A549 (cell line): ENCODE measurements at regions of chr14 and their contacts with region 1.

Region 1: DNA sequence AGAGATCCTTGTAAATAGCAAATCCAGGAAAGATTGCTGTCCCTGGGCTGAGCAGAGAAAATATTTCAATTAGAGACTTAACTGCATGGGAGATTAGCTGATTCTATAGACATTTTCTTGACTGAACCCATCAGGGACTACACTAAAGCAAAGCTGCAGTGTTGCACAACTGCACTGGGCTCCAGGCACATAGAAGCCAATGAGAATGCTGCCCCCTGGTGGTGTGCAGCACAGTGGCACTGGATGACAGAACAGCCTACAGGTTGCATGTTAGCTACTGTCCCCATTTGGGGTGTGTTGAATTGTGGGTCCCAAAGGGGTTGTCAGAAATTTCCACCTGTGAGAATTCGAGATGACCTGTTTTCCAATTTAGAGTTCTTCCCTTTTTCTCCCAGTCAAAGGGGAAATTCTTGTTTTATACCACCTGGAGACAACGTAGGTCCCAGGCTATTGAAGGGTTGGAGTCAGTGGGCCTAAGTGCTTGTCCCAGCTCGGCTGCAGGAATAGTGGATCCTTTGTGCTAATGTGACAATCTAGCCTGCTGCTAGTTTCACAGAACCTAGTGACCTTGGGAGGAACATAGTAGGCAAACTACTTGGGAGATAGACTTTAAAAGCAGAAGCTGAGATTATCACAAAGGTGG is 114.7 kb downstream of the SLC8A3 start:
- DNase-seq: peak; percentile 85
- ATAC-seq: peak; percentile 97 to 99
- H3K4me3 ChIP-seq: no peak overlapping the region
- H3K27ac ChIP-seq: peak overlapping the region; percentile 55 to 58; a peak in 5 of 6 replicates
- H3K4me1 ChIP-seq: peaks cover 14% of the 10 kb centered on the region
- CTCF ChIP-seq: peak; percentile 95
- EP300 ChIP-seq: no peak
- POLR2A ChIP-seq: no peak
- RAD21 ChIP-seq: peak; percentile 89 to 95

Region 2: DNA sequence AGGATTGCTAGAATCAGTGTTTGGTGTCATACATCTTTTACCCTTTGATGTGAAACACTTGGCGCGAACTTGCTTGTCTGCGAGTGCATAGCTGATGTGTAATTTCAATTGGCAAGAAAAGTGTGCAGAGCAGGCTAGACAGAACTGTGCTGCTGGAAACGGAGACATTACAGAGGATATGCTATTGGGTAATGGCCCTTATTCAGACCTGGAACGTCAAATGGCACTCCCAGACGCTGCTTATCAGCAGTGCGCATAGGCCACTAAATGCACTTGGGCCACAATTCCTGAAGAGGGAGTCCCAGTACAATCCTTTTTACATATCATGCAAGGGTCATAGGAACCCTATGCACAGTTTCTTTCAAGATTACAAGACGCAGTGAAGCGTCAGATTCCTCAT is 261.3 kb before region 1 on chr14:
- CTCF ChIA-PET with region 1: interaction called, 85 read pairs
- POLR2A ChIA-PET with region 1: no interaction called
- DNase-seq: peak in 1 of 2 experiments; percentile 46
- ATAC-seq: 0 out of 6 replicates have a peak, but pooled peaks have one; percentile 36 to 53
- H3K4me3 ChIP-seq: no peak overlapping the region
- H3K27ac ChIP-seq: no peak overlapping the region
- H3K4me1 ChIP-seq: no peaks in the 10 kb centered on the region
- CTCF ChIP-seq: peak; percentile 34; the same call in 2 of the 3 replicates
- EP300 ChIP-seq: no peak
- POLR2A ChIP-seq: no peak
- RAD21 ChIP-seq: peak; percentile 48 to 53; a peak in 3 of 5 replicates

Region 3: GRCh38 chr14:70045844-70046535 is 28.1 kb before region 1 on chr14:
- CTCF ChIA-PET with region 1: interaction called, 101 read pairs
- POLR2A ChIA-PET with region 1: no interaction called
- DNase-seq: peak; percentile 71 to 82
- ATAC-seq: peak; percentile 87 to 95
- H3K4me3 ChIP-seq: no peak overlapping the region
- H3K27ac ChIP-seq: peak overlapping the region; percentile 89 to 90
- H3K4me1 ChIP-seq: peaks cover 39% of the 10 kb centered on the region
- CTCF ChIP-seq: peak; percentile 74
- EP300 ChIP-seq: no peak
- POLR2A ChIP-seq: no peak; the same call in 1 of the 2 replicates
- RAD21 ChIP-seq: peak; percentile 90

Region 4: GRCh38 chr14:70052990-70053389 is 21.1 kb before region 1 on chr14:
- CTCF ChIA-PET with region 1: interaction called, 101 read pairs
- POLR2A ChIA-PET with region 1: no interaction called
- DNase-seq: peak in 1 of 2 experiments; percentile 23
- ATAC-seq: no peak
- H3K4me3 ChIP-seq: no peak overlapping the region
- H3K27ac ChIP-seq: no peak overlapping the region
- H3K4me1 ChIP-seq: peaks cover 15% of the 10 kb centered on the region
- CTCF ChIP-seq: no peak
- EP300 ChIP-seq: no peak
- POLR2A ChIP-seq: no peak
- RAD21 ChIP-seq: no peak

Region 5: GRCh38 chr14:70061108-70061507 is 12.9 kb before region 1 on chr14:
- CTCF ChIA-PET with region 1: interaction called, 34 read pairs
- POLR2A ChIA-PET with region 1: no interaction called
- DNase-seq: no peak
- ATAC-seq: no peak
- H3K4me3 ChIP-seq: no peak overlapping the region
- H3K27ac ChIP-seq: peak overlapping the region in 1 of 2 experiments; percentile 3; a peak in 1 of 6 replicates
- H3K4me1 ChIP-seq: peaks cover 16% of the 10 kb centered on the region
- CTCF ChIP-seq: no peak
- EP300 ChIP-seq: no peak
- POLR2A ChIP-seq: no peak
- RAD21 ChIP-seq: no peak

Region 6: GRCh38 chr14:70086685-70087379 is 12.8 kb after region 1 on chr14:
- CTCF ChIA-PET with region 1: interaction called, 41 read pairs
- POLR2A ChIA-PET with region 1: no interaction called
- DNase-seq: peak in 1 of 2 experiments; percentile 65
- ATAC-seq: peak; percentile 59 to 79; a peak in 3 of 6 replicates
- H3K4me3 ChIP-seq: no peak overlapping the region
- H3K27ac ChIP-seq: no peak overlapping the region
- H3K4me1 ChIP-seq: no peaks in the 10 kb centered on the region
- CTCF ChIP-seq: peak; percentile 62
- EP300 ChIP-seq: no peak
- POLR2A ChIP-seq: no peak
- RAD21 ChIP-seq: peak; percentile 48 to 52; a peak in 4 of 5 replicates

Region 7: DNA sequence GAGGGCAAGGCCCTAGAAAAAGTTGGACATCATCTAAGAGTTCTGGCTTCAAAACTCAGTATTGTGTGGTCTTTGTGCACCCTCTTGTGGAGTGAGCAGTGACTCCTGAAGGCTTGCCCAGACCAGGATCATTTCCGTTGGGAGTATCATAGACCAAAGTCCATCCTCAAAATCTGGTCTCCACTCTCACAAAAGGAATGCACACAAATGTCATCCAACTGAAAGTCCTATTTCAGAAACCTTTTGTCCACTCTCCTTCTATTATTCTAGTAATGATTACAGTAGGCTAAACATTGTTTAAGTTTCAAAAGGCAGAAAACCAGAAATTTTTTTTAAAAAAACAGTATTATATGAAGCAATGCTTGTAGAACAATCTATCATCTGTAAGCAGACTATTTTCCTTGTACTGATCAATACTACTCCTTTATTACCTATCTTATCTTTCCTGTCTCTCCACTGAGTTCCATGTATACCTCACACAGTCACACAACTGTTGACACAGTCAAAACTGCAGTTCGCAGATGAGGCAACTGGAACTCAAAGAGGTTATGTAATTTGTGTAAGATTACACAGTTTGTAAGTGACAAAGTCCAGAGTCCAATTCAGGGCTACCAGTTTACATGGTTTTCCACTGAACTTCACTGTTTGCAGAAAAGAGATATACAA is 244.1 kb after region 1 on chr14:
- CTCF ChIA-PET with region 1: interaction called, 12 read pairs
- POLR2A ChIA-PET with region 1: no interaction called
- DNase-seq: peak; percentile 40 to 78
- ATAC-seq: peak; percentile 97
- H3K4me3 ChIP-seq: peak overlapping the region; percentile 8; the same call in 1 of the 3 replicates
- H3K27ac ChIP-seq: 0 out of 6 replicates have a peak overlapping the region, but pooled peaks of 1 of the 2 experiments have one; percentile 11
- H3K4me1 ChIP-seq: peaks cover 16% of the 10 kb centered on the region; the same call in 2 of the 3 replicates
- CTCF ChIP-seq: peak; percentile 83
- EP300 ChIP-seq: no peak
- POLR2A ChIP-seq: no peak
- RAD21 ChIP-seq: peak; percentile 78 to 92